A549 (cell line): ENCODE measurements at regions of chr3 and their contacts with region 1.

Region 1: DNA sequence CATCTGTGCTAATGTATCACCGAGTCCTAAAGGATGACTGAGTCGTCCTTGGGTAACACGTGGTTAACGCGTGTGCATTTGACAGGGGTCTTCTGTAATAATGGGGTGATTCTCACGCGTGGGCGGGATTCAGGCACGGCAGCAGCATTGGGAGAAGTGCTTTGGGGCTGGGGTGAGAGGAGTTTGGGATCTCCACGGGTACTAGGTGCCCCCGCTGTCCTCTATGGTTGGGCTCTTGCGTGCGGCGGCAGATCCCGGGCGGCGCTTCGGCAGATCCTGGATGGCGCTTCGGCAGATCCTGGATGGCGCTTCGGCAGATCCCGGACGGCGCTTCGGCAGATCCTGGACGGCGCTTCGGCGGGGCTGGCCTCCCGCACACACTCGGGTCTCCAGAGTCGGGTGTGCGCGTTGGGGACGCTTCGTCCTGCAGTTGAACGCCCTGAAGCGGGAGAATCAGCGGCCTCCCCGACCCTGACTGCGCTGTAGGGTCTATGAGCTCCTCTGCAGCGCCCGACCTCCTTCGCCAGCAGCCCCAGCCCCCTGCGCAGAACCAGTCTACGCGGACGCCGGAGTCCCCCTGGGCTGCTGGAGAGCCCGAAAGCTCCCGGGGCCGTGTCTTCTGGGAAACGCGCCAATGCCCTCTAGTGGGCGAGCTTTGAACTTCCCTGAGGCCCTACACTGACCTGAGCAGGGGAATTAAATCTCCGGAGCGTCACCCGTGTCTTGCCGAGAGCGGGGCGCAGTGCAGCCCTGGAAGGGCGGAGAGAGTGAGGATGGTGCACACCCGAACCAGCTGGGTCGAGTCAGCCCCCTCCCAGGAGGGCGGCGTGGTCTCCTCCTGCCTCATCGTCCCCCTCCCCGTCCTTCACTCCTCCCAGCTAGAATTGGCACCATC is 48.1 kb upstream of the EPHB3 start:
- DNase-seq: peak; percentile 55 to 84
- ATAC-seq: peak; percentile 96 to 100
- H3K4me3 ChIP-seq: peak overlapping the region; percentile 37
- H3K27ac ChIP-seq: no peak overlapping the region
- H3K4me1 ChIP-seq: no peaks in the 10 kb centered on the region
- CTCF ChIP-seq: peak; percentile 56
- EP300 ChIP-seq: no peak
- POLR2A ChIP-seq: no peak
- RAD21 ChIP-seq: peak; percentile 67 to 71

Region 2: GRCh38 chr3:184383033-184383740 is 130.3 kb before region 1 on chr3:
- CTCF ChIA-PET with region 1: interaction called, 16 read pairs
- POLR2A ChIA-PET with region 1: no interaction called
- DNase-seq: no peak
- ATAC-seq: no peak
- H3K4me3 ChIP-seq: no peak overlapping the region
- H3K27ac ChIP-seq: no peak overlapping the region
- H3K4me1 ChIP-seq: no peaks in the 10 kb centered on the region
- CTCF ChIP-seq: no peak
- EP300 ChIP-seq: no peak
- POLR2A ChIP-seq: no peak
- RAD21 ChIP-seq: no peak

Region 3: GRCh38 chr3:184428561-184429175 is 84.9 kb before region 1 on chr3:
- CTCF ChIA-PET with region 1: interaction called, 132 read pairs
- POLR2A ChIA-PET with region 1: no interaction called
- DNase-seq: no peak
- ATAC-seq: no peak
- H3K4me3 ChIP-seq: no peak overlapping the region
- H3K27ac ChIP-seq: no peak overlapping the region
- H3K4me1 ChIP-seq: no peaks in the 10 kb centered on the region
- CTCF ChIP-seq: no peak
- EP300 ChIP-seq: no peak
- POLR2A ChIP-seq: no peak
- RAD21 ChIP-seq: no peak

Region 4: GRCh38 chr3:184441202-184441900 is 72.2 kb before region 1 on chr3:
- CTCF ChIA-PET with region 1: no interaction called
- POLR2A ChIA-PET with region 1: no interaction called
- DNase-seq: no peak
- ATAC-seq: no peak
- H3K4me3 ChIP-seq: no peak overlapping the region
- H3K27ac ChIP-seq: no peak overlapping the region
- H3K4me1 ChIP-seq: no peaks in the 10 kb centered on the region
- CTCF ChIP-seq: no peak
- EP300 ChIP-seq: no peak
- POLR2A ChIP-seq: no peak
- RAD21 ChIP-seq: no peak

Region 5: GRCh38 chr3:184474897-184475296 is 38.6 kb before region 1 on chr3:
- CTCF ChIA-PET with region 1: interaction called, 51 read pairs
- POLR2A ChIA-PET with region 1: no interaction called
- DNase-seq: no peak
- ATAC-seq: no peak
- H3K4me3 ChIP-seq: no peak overlapping the region
- H3K27ac ChIP-seq: no peak overlapping the region
- H3K4me1 ChIP-seq: no peaks in the 10 kb centered on the region
- CTCF ChIP-seq: no peak
- EP300 ChIP-seq: no peak
- POLR2A ChIP-seq: no peak
- RAD21 ChIP-seq: no peak

Region 6: GRCh38 chr3:184498986-184499606 is 14.4 kb before region 1 on chr3:
- CTCF ChIA-PET with region 1: interaction called, 16 read pairs
- POLR2A ChIA-PET with region 1: no interaction called
- DNase-seq: no peak
- ATAC-seq: no peak
- H3K4me3 ChIP-seq: no peak overlapping the region
- H3K27ac ChIP-seq: no peak overlapping the region
- H3K4me1 ChIP-seq: no peaks in the 10 kb centered on the region
- CTCF ChIP-seq: no peak
- EP300 ChIP-seq: no peak
- POLR2A ChIP-seq: no peak
- RAD21 ChIP-seq: no peak

Region 7: GRCh38 chr3:184543843-184544512 is 30.5 kb after region 1 on chr3:
- CTCF ChIA-PET with region 1: interaction called, 34 read pairs
- POLR2A ChIA-PET with region 1: no interaction called
- DNase-seq: peak; percentile 66 to 87
- ATAC-seq: peak; percentile 89 to 94
- H3K4me3 ChIP-seq: no peak overlapping the region
- H3K27ac ChIP-seq: no peak overlapping the region
- H3K4me1 ChIP-seq: no peaks in the 10 kb centered on the region
- CTCF ChIP-seq: peak; percentile 71
- EP300 ChIP-seq: no peak
- POLR2A ChIP-seq: no peak
- RAD21 ChIP-seq: peak; percentile 82 to 84

Region 8: GRCh38 chr3:184610245-184610871 is 96.8 kb after region 1 on chr3:
- CTCF ChIA-PET with region 1: no interaction called
- POLR2A ChIA-PET with region 1: no interaction called
- DNase-seq: no peak
- ATAC-seq: no peak
- H3K4me3 ChIP-seq: no peak overlapping the region
- H3K27ac ChIP-seq: no peak overlapping the region
- H3K4me1 ChIP-seq: no peaks in the 10 kb centered on the region
- CTCF ChIP-seq: no peak
- EP300 ChIP-seq: no peak
- POLR2A ChIP-seq: no peak
- RAD21 ChIP-seq: no peak